ENCODE measurements at regions of chr4 and their contacts with region 1.

Region 1: GRCh38 chr4:56799824-56800756 is 21.4 kb downstream of the SPINK2 start:
- DNase-seq: peak; percentile 92
- H3K4me3 Mint-ChIP-seq: peak overlapping the region; percentile 79
- H3K27ac Mint-ChIP-seq: no peak overlapping the region
- H3K4me1 Mint-ChIP-seq: peaks cover 13% of the 10 kb centered on the region
- H3K27me3 Mint-ChIP-seq: no peaks in the 10 kb centered on the region

Region 2: GRCh38 chr4:56424697-56425514 is 375.2 kb before region 1 on chr4:
- CTCF ChIA-PET with region 1: interaction called, 7 read pairs
- POLR2A ChIA-PET with region 1: no interaction called
- intact Hi-C with region 1: loop called (anchors 1 kb)
- DNase-seq: no peak
- H3K4me3 Mint-ChIP-seq: no peak overlapping the region
- H3K27ac Mint-ChIP-seq: no peak overlapping the region
- H3K4me1 Mint-ChIP-seq: peaks cover 16% of the 10 kb centered on the region
- H3K27me3 Mint-ChIP-seq: no peaks in the 10 kb centered on the region

Region 3: GRCh38 chr4:56575820-56576429 is 224.2 kb before region 1 on chr4:
- CTCF ChIA-PET with region 1: interaction called, 27 read pairs
- POLR2A ChIA-PET with region 1: no interaction called
- intact Hi-C with region 1: loop called (anchors 1 kb)
- DNase-seq: no peak
- H3K4me3 Mint-ChIP-seq: no peak overlapping the region
- H3K27ac Mint-ChIP-seq: no peak overlapping the region
- H3K4me1 Mint-ChIP-seq: no peaks in the 10 kb centered on the region
- H3K27me3 Mint-ChIP-seq: peaks cover 3% of the 10 kb centered on the region

Region 4: DNA sequence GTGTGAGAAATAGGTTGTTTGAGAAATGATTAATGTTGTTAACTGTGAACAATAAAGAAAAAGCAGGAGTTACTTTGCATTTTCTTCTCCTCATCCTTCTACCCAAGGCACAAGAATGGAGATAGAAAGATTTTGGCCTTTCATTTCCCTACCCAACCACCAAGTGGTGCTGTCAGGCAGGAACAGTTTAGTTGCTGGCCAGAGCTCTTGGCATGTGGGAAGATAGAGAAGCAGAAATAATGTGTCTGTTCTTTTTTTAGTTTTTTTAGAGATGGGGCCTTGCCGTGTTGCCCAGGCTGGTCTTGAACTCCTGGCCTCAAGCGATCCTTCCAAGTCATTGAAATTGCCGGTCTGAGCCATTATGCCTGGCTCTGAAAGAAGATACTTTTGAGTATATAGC is 131.8 kb before region 1 on chr4:
- CTCF ChIA-PET with region 1: interaction called, 14 read pairs
- POLR2A ChIA-PET with region 1: no interaction called
- intact Hi-C with region 1: loop called (anchors 1 kb)
- DNase-seq: peak; percentile 35
- H3K4me3 Mint-ChIP-seq: no peak overlapping the region
- H3K27ac Mint-ChIP-seq: no peak overlapping the region
- H3K4me1 Mint-ChIP-seq: peaks cover 3% of the 10 kb centered on the region
- H3K27me3 Mint-ChIP-seq: peaks cover 29% of the 10 kb centered on the region

Region 5: DNA sequence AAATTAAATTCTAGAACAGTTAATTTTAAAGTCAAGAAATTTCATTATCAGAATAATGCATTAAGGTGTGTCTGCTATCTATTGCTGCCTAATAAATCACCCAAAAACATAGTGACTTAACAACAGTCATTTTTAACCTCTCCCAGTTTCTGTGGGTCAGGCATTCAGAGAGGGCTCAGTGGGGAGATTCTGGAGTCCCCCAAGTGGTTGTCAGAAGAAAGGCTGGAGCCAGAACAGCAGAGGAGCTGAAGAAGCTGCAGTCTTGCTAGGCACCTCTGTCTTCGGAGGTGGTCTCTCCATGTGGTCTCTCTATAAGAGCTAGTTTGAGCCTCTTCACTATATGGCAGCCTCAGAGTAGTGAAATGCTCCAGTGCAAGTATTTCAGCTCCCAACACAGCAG is 109.7 kb before region 1 on chr4:
- CTCF ChIA-PET with region 1: no interaction called
- POLR2A ChIA-PET with region 1: no interaction called
- intact Hi-C with region 1: no loop called
- DNase-seq: no peak
- H3K4me3 Mint-ChIP-seq: no peak overlapping the region
- H3K27ac Mint-ChIP-seq: no peak overlapping the region
- H3K4me1 Mint-ChIP-seq: no peaks in the 10 kb centered on the region
- H3K27me3 Mint-ChIP-seq: peaks cover 13% of the 10 kb centered on the region

Region 6: DNA sequence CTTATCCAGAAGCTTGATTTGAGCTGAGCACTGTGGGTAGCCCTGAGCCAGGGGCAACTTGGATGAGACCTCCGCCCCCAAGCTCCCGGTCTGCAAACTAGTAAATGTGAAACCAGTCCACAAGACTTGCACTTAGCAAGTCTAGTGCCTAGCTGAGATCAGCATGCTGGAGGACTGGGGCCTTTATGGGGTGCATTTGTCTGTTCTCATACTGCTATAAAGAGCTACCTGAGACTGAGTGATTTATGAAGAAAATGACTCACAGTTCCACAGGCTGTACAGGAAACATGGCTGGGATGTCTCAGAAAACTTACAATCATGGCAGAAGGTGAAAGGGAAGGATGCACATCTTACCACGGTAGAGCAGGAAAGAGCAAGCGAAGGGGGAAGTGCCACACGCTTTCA is 76.9 kb before region 1 on chr4:
- CTCF ChIA-PET with region 1: interaction called, 4 read pairs
- POLR2A ChIA-PET with region 1: no interaction called
- intact Hi-C with region 1: loop called (anchors 2 kb)
- DNase-seq: peak; percentile 77
- H3K4me3 Mint-ChIP-seq: peak overlapping the region; percentile 5
- H3K27ac Mint-ChIP-seq: peak overlapping the region; percentile 80
- H3K4me1 Mint-ChIP-seq: peaks cover 23% of the 10 kb centered on the region
- H3K27me3 Mint-ChIP-seq: peaks cover 1% of the 10 kb centered on the region

Region 7: GRCh38 chr4:56907489-56908205 is 107.6 kb after region 1 on chr4 and contains the start of gene REST:
- CTCF ChIA-PET with region 1: interaction called, 3 read pairs
- POLR2A ChIA-PET with region 1: no interaction called
- intact Hi-C with region 1: loop called (anchors 5 kb)
- DNase-seq: peak; percentile 80
- H3K4me3 Mint-ChIP-seq: peak within 1 kb of the TSS; percentile 88
- H3K27ac Mint-ChIP-seq: peak within 1 kb of the TSS; percentile 55
- H3K4me1 Mint-ChIP-seq: peaks cover 41% of the 10 kb centered on the region
- H3K27me3 Mint-ChIP-seq: no peaks in the 10 kb centered on the region
- total RNA-seq, gene REST: 46.1 to 47.0 TPM

Region 8: DNA sequence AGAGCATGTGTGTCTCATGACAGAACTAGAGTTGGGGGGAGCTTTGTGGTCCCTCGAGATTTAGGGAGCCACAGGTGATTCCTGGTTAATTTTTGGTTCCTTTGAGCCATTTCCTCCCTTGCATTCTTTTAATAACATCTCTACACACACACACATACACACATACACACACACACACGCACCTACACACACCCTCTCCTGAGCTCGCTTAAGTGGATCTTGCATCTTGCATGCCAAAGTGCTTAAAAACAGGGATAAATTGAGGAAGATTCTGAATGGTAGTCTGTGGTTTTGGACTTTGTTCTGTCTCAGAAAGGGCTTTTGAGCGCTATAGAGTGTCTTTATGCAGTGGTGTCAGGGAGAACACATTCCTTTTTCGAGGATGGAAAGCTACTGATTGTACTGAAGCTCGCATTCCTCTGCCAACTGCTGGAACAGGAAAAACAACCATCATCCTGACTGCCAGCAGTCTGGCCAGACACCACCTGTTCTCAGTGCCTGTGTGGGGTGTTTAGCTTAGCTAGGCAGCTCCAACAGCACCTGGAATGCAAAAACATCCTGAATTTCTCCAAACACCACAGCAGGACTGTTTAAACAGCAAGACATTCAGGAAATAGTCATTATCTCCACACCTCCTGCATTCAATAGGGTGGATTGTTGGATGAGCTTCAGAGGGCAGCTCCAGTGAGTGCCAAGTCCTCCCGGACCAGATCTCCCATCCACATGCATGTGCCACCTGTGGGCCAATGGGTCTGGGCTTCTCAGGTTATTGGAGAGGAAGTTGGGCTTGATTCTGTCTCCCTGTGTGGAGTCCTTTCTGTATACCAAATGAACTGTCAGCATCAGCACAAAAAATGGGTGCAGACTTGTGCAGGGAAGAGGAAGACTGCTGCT is 332.0 kb after region 1 on chr4:
- CTCF ChIA-PET with region 1: no interaction called
- POLR2A ChIA-PET with region 1: no interaction called
- intact Hi-C with region 1: no loop called
- DNase-seq: no peak
- H3K4me3 Mint-ChIP-seq: no peak overlapping the region
- H3K27ac Mint-ChIP-seq: no peak overlapping the region
- H3K4me1 Mint-ChIP-seq: no peaks in the 10 kb centered on the region
- H3K27me3 Mint-ChIP-seq: peaks cover 9% of the 10 kb centered on the region

Measured in activated CD4-positive, alpha-beta memory T cell treated with anti-CD3 and anti-CD28 coated beads for 36 hours (primary cell).